Left ventricle myocardium superior (tissue), 1 donor: ENCODE measurements at regions of chr16 and their contacts with region 1.

Region 1: DNA sequence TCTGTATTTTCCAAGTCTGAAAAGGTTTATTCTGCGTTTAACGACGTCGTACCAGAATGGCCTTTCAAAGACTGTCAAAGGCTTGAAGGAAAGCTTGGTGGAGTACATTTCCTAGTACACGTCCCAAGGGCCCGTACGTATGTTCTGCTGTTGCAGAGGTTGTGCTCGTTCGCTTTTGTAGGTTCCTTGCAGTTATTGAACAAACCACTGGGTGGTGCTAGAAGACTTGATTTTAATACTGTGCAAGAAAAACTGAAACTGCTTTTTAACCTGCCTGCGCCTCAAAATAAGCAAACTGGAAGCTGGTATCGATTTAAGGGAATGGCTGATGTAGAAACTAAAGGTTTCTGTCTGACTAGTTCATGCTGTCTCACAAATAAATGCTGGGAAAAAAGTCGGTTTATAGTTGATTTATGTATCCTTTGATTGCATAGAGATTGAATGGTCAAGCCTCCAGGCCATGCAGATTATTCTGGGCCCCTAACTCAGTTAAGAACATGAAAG is 54.6 kb downstream of the USP10 start:
- DNase-seq: no peak
- ATAC-seq: peak; percentile 79

Region 2: DNA sequence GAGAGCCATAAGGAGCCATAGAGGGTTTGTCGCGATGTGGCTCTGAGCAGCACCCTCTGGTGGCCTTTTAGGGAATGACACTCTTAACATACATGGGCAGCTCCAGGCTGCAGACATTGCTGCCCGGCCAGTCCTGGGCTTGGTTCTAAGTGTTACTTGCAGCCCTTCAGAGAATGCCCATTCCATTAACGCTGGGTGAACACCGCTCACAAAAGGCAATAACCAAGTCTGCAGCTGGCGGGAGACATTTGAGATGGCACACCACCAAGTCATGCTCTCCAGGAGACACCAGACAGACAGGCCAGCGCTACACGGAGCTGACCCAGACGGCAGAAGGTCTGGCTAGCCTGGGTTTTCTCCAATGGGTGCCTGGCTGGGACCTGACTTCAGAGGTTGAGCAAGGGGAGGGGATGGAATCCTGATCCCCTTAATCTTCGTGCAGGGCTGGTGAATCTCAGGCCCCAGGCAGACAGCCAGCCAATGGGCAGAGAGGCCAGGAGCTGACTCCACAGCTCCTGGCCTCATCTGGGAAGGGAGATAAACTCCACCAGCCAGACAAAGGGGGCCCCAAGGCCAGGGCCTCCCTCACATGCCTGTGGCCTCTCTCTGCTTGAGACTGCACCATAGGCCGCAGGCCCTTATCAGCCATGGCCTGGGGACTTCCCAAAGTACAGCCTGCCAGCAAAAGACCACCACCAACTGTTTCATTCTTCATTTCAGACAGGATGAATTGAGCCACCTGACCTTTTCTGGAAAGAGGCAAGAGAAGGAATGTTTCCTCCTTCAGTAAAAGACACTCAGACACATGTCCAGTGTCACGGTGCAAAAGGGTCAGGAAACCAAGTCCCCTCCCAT is 198.2 kb after region 1 on chr16:
- intact Hi-C with region 1: loop called (anchors 10 kb)
- DNase-seq: peak; percentile 76
- ATAC-seq: peak; percentile 94